ENCODE measurements at regions of chr16 and their contacts with region 1.

Region 1: DNA sequence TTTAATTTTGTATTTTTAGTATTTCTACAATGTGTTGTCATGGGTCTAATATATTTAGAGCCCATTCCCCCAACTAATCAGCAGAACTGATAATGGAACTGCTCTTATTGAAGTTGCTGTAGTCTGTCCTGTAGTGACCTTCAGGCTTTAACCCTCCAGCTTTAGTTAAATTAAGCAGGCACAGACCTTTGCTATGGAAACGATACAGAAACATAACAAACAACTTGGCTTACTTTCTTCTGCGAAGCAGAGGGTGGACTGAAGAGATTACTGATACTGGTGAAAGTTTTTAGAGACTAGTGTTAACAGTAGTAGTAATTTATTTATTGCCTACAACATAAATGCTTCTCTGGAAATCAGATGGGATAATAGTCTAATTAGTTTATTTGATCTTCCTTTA is 61.4 kb downstream of the NFATC3 start:
- DNase-seq: no peak
- ATAC-seq: no peak
- H3K4me3 ChIP-seq: no peak overlapping the region
- H3K4me1 ChIP-seq: peaks cover 4% of the 10 kb centered on the region
- CTCF ChIP-seq: no peak

Region 2: DNA sequence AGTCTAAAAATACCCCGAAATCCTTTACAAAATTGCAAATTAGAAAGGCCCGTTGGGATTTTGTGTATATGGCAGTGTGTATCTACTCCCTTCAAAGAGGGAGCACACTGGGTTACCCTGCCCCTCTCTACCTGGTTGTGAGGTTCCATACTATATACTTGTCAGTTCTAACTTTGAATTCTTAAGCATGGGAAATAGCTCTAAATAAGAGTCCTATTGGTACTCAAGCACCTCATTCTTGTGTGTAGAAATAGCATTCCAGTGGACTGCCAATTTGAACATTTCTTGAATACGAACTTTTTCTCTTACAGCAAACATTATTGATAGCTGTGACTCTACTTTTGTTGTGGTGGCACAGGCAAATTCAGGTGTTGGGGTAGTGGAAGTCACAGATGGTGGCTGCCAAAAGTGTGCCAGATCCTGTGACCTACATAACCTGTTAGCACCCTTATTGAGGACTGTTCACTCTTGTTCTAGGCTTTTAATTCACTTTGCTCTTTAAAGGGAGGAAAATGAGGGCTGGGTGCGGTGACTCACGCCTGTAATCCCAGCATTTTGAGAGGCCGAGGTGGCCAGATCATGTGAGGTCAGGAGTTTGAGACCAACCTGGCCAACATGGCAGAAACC is 73.3 kb after region 1 on chr16:
- intact Hi-C with region 1: loop called in 1 of 2 experiments (anchors 5 kb)
- DNase-seq: no peak
- ATAC-seq: no peak
- H3K4me3 ChIP-seq: no peak overlapping the region
- H3K4me1 ChIP-seq: no peaks in the 10 kb centered on the region
- CTCF ChIP-seq: no peak

Measured in mucosa of descending colon (tissue), 3 donors.